Caco-2 (cell line): ENCODE measurements at regions of chr10 and their contacts with region 1.

Region 1: DNA sequence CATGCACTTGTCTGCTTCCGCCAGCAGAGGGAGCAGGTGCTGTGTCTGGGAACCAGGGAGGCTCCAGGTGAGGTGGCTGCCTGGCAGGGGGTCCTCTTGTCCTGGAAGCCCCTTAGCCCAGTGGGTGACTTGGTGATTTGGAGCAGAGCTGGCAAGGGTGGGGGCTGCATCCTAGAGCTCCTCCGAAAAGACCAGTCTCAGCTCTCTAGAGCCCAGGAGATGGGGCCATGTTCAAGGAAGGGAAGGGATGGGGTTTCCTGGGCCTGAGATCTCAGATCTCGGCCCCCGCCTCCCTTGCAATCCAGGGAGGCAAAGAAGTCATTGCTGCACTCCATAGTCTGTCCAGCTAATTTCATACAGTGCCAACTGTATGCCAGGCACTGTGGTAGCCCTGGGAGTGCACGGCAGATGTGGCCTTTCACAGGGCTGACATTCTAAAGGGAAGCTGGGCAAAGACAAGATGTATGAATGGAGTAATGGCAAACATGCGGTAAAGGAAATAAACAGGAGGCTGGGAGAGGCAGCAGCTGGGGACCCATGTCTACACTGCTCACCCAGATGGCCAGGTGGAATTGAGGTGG is 20.4 kb upstream of the SFRP5 start:
- DNase-seq: peak; percentile 70 to 85
- H3K4me3 ChIP-seq: no peak overlapping the region
- H3K4me3 Mint-ChIP-seq: no peak overlapping the region
- H3K27ac Mint-ChIP-seq: no peak overlapping the region
- H3K4me1 ChIP-seq: peaks cover 40% of the 10 kb centered on the region
- H3K4me1 Mint-ChIP-seq: peaks cover 6% of the 10 kb centered on the region
- H3K27me3 ChIP-seq: no peaks in the 10 kb centered on the region
- H3K27me3 Mint-ChIP-seq: no peaks in the 10 kb centered on the region
- CTCF ChIP-seq: peak; percentile 95 to 96

Region 2: GRCh38 chr10:97771055-97771811 is 21.0 kb before region 1 on chr10:
- CTCF ChIA-PET with region 1: no interaction called
- POLR2A ChIA-PET with region 1: interaction called, 11 read pairs
- intact Hi-C with region 1: loop called (anchors 2 kb)
- DNase-seq: peak in 1 of 2 experiments; percentile 50
- H3K4me3 ChIP-seq: peak overlapping the region; percentile 43
- H3K4me3 Mint-ChIP-seq: peak overlapping the region; percentile 75
- H3K27ac Mint-ChIP-seq: no peak overlapping the region
- H3K4me1 ChIP-seq: peaks cover 17% of the 10 kb centered on the region; the same call in 1 of the 2 replicates
- H3K4me1 Mint-ChIP-seq: peaks cover 7% of the 10 kb centered on the region
- H3K27me3 ChIP-seq: peaks cover 2% of the 10 kb centered on the region; the same call in 1 of the 2 replicates
- H3K27me3 Mint-ChIP-seq: peaks cover 12% of the 10 kb centered on the region
- CTCF ChIP-seq: no peak